ENCODE measurements at regions of chr7 and their contacts with region 1.

Region 1: DNA sequence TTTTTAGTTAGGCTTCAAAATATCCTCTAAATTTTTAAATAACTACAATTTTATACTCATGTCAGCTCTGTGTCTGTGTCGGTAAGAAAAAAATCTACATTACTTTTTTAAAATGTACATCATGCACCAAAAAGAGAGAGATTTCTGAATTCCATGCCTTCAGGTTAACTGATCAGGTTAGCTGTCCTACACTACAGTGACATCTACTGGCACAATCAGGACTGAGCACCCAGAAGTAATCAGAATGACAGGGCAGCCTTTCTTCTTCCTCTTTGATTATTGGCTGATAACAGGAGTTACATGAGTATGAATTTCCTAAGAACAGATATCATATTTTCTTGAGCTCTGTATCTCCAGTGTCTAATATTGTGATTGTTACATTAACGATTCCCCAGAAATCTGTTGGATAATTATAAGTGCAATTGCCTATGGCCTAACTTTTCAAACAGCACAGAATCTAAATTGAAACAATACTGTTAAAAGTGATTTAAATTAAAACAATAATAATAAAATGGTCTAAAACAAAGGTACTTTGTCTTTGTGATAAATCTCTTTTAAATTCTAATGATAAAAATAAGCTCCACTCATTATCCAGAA is 41.8 kb upstream of the HYCC1 start:
- DNase-seq: no peak
- H3K4me3 ChIP-seq: no peak overlapping the region
- CTCF ChIP-seq: peak; percentile 76

Region 2: DNA sequence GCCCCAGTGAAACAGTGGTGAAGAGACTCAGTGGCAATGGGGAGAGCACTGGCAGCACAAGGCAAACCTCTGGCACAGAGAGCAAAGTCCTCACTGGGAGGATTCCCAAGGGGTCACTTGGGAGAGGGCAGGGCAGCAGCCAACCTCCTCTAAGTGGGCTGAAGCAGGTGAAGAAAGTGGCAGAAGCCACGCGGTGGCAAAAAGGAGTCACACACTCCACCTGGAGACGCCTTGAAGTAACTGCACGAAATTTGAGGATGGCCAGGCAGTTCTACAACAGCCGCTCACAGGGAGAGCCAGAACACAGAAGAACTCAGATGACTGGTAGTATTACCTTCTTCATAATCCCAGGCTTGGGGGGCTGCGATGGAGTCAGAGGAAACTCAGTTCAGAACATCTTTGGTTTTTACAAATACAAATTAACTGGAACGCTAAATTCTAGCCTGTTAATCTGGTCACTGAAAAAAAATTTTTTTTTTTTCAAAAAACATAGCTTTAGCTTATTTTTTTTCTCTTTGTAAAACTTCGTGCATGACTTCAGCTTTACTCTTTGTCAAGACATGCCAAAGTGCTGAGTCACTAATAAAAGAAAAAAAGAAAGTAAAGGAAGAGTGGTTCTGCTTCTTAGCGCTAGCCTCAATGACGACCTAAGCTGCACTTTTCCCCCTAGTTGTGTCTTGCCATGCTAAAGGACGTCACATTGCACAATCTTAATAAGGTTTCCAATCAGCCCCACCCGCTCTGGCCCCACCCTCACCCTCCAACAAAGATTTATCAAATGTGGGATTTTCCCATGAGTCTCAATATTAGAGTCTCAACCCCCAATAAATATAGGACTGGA is 329.1 kb before region 1 on chr7:
- CTCF ChIA-PET with region 1: interaction called, 26 read pairs
- POLR2A ChIA-PET with region 1: no interaction called
- DNase-seq: peak; percentile 86
- H3K4me3 ChIP-seq: peak overlapping the region; percentile 49
- CTCF ChIP-seq: peak; percentile 62

Region 3: GRCh38 chr7:22822486-22823141 is 233.1 kb before region 1 on chr7 and contains the start of gene TOMM7:
- CTCF ChIA-PET with region 1: interaction called, 27 read pairs
- POLR2A ChIA-PET with region 1: no interaction called
- DNase-seq: peak; percentile 76
- H3K4me3 ChIP-seq: peak within 1 kb of the TSS; percentile 96
- CTCF ChIP-seq: peak; percentile 19

Region 4: GRCh38 chr7:22860784-22861482 is 194.7 kb before region 1 on chr7:
- CTCF ChIA-PET with region 1: interaction called, 22 read pairs
- POLR2A ChIA-PET with region 1: no interaction called
- DNase-seq: no peak
- H3K4me3 ChIP-seq: no peak overlapping the region
- CTCF ChIP-seq: no peak

Region 5: DNA sequence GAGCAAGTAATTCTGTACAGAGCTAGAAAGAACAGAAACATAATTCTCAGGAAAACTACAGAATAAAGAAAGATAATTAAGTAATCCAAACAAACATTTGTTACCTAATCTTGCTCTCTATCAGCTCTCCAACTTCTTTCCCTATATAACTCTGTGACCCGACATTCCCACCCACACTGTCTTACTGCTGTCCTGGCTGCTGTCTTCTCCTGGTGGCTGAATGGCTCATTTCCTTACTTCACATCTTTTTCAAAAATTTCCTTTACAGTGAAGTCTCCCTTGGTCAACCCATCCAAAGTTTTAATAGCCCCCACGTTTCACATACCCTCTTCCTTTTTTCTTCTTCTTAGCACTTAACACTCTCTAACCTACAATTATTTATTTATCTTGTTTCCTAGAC is 105.7 kb before region 1 on chr7:
- CTCF ChIA-PET with region 1: interaction called, 22 read pairs
- POLR2A ChIA-PET with region 1: no interaction called
- DNase-seq: no peak
- H3K4me3 ChIP-seq: no peak overlapping the region
- CTCF ChIP-seq: peak; percentile 3

Region 6: GRCh38 chr7:23043441-23043840 is 12.2 kb before region 1 on chr7:
- CTCF ChIA-PET with region 1: interaction called, 39 read pairs
- POLR2A ChIA-PET with region 1: no interaction called
- DNase-seq: no peak
- H3K4me3 ChIP-seq: no peak overlapping the region
- CTCF ChIP-seq: no peak

Region 7: GRCh38 chr7:23956772-23957556 is 901.3 kb after region 1 on chr7:
- CTCF ChIA-PET with region 1: no interaction called
- POLR2A ChIA-PET with region 1: no interaction called
- DNase-seq: no peak
- H3K4me3 ChIP-seq: no peak overlapping the region; the same call in 1 of the 2 replicates
- CTCF ChIP-seq: no peak

Measured in AG04449 (cell line).